ENCODE measurements at regions of chr13 and their contacts with region 1.

Region 1: DNA sequence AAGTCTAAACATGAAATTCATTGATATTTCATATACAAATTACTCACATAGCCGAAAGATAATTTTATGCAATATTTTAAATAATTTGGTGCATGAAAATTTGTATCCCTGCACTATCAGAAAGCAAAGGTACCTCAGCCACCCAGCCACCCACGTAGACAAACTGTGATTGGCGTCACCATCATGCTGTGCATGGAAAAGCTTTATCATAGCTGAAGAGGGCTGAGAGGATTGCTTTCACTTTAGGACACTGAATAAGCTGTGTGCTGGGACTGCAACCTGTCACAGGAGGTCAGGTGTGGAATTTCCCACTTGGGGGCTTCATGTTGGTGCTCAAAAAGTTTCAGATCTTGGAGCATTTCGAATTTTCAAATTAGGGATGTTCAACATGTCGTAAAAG is 96.3 kb downstream of the MYCBP2 start:
- DNase-seq: peak in 1 of 14 experiments; percentile 14
- ATAC-seq: no peak
- H3K4me3 ChIP-seq: no peak overlapping the region
- H3K4me3 Mint-ChIP-seq: no peak overlapping the region
- H3K27ac ChIP-seq: no peak overlapping the region
- H3K27ac Mint-ChIP-seq: no peak overlapping the region
- H3K4me1 ChIP-seq: no peaks in the 10 kb centered on the region
- H3K4me1 Mint-ChIP-seq: peaks cover 18% of the 10 kb centered on the region
- H3K27me3 ChIP-seq: no peaks in the 10 kb centered on the region
- H3K27me3 Mint-ChIP-seq: no peaks in the 10 kb centered on the region
- CTCF ChIP-seq: no peak

Region 2: DNA sequence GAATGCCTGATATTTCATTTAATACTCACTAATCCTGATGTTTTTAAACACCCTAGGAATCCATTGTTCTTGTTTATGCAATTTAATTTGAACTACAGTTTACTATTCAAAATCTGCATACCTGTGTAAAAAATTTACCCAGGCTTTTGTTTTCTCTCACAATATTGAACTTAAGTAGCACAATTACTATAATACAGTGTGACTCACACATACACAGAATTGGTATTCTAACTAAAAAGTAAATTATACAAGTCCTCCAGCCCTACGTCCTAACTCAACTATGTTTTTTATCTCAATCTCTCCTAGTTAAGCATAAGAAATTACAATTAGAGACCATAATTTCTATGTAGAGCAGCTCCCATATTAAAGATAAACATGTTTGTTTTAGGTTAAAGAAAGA is 54.5 kb after region 1 on chr13:
- CTCF ChIA-PET with region 1: no interaction called
- POLR2A ChIA-PET with region 1: no interaction called
- intact Hi-C with region 1: loop called in 1 of 2 experiments (anchors 5 kb)
- DNase-seq: no peak
- ATAC-seq: no peak
- H3K4me3 ChIP-seq: no peak overlapping the region
- H3K4me3 Mint-ChIP-seq: no peak overlapping the region
- H3K27ac ChIP-seq: no peak overlapping the region
- H3K27ac Mint-ChIP-seq: no peak overlapping the region
- H3K4me1 ChIP-seq: peaks cover 2% of the 10 kb centered on the region
- H3K4me1 Mint-ChIP-seq: peaks cover 20% of the 10 kb centered on the region
- H3K27me3 ChIP-seq: no peaks in the 10 kb centered on the region
- H3K27me3 Mint-ChIP-seq: no peaks in the 10 kb centered on the region
- CTCF ChIP-seq: no peak

Region 3: DNA sequence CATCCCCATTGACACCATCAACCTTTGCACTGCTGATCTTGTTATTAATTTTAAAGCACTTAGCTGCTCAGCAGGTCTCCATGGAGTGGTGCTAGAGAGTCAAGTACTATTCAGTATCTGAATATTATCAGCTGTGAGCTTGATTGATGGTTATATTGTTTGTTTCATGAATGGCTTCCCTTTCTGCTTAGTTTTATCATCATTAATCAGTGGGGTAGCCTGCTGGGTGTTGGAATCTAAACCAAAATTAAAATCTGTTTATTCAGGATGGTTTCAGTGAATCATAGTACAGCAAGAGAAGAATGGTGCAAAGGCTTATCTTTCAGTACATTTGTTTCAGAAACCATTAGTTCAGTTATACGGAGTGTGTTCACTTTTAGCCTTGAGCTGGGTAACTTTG is 262.4 kb after region 1 on chr13:
- CTCF ChIA-PET with region 1: no interaction called
- POLR2A ChIA-PET with region 1: no interaction called
- intact Hi-C with region 1: no loop called
- DNase-seq: peak in 2 of 14 experiments; percentile 23 to 29
- ATAC-seq: no peak
- H3K4me3 ChIP-seq: no peak overlapping the region
- H3K4me3 Mint-ChIP-seq: no peak overlapping the region
- H3K27ac ChIP-seq: no peak overlapping the region
- H3K27ac Mint-ChIP-seq: no peak overlapping the region
- H3K4me1 ChIP-seq: no peaks in the 10 kb centered on the region
- H3K4me1 Mint-ChIP-seq: no peaks in the 10 kb centered on the region
- H3K27me3 ChIP-seq: no peaks in the 10 kb centered on the region
- H3K27me3 Mint-ChIP-seq: no peaks in the 10 kb centered on the region
- CTCF ChIP-seq: peak; percentile 25

Region 4: DNA sequence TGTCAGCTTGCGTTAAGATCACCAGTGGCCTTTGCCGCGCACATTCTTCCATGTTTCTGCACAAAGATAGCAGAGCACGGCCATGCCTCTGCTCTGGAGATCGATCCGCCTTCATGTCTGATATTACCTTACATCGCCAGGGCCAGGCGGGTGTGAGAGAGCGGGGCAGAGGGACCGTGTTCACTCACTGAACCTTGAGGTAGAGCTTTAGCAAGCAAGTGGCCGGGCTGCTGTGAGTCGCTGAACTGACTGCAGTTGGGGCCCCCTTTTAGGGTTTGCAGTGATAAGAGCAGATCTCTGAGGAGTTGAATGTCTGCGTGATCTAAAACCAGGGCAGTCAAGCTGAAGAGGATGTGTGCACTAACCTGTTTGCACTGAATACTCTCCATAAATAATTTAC is 1703.8 kb after region 1 on chr13:
- CTCF ChIA-PET with region 1: no interaction called
- POLR2A ChIA-PET with region 1: no interaction called
- intact Hi-C with region 1: no loop called
- DNase-seq: no peak
- ATAC-seq: no peak
- H3K4me3 ChIP-seq: no peak overlapping the region
- H3K4me3 Mint-ChIP-seq: no peak overlapping the region
- H3K27ac ChIP-seq: no peak overlapping the region
- H3K27ac Mint-ChIP-seq: no peak overlapping the region
- H3K4me1 ChIP-seq: no peaks in the 10 kb centered on the region
- H3K4me1 Mint-ChIP-seq: no peaks in the 10 kb centered on the region
- H3K27me3 ChIP-seq: no peaks in the 10 kb centered on the region
- H3K27me3 Mint-ChIP-seq: peaks cover 7% of the 10 kb centered on the region
- CTCF ChIP-seq: no peak